Activated B cell treated with CpG ODN at 0.5 μM for 24 hours (primary cell): ENCODE measurements at regions of chr11 and their contacts with region 1.

Region 1: GRCh38 chr11:68271781-68272608 is at the start of gene C11orf24:
- DNase-seq: peak; percentile 95
- ATAC-seq: peak; percentile 78
- H3K4me3 Mint-ChIP-seq: peak within 1 kb of the TSS; percentile 95
- H3K27ac Mint-ChIP-seq: peak within 1 kb of the TSS; percentile 98
- H3K4me1 Mint-ChIP-seq: peaks cover 79% of the 10 kb centered on the region
- H3K27me3 Mint-ChIP-seq: no peaks in the 10 kb centered on the region
- CTCF ChIP-seq: no peak
- total RNA-seq, gene C11orf24: 75.5 and 78.0 TPM in 2 replicates

Region 2: GRCh38 chr11:67613960-67614715 is 657.9 kb before region 1 on chr11:
- CTCF ChIA-PET with region 1: no interaction called
- POLR2A ChIA-PET with region 1: no interaction called
- intact Hi-C with region 1: loop called (anchors 10 kb)
- DNase-seq: peak; percentile 81
- ATAC-seq: peak; percentile 95
- H3K4me3 Mint-ChIP-seq: peak overlapping the region; percentile 84
- H3K27ac Mint-ChIP-seq: peak overlapping the region; percentile 99
- H3K4me1 Mint-ChIP-seq: peaks cover 41% of the 10 kb centered on the region
- H3K27me3 Mint-ChIP-seq: no peaks in the 10 kb centered on the region
- CTCF ChIP-seq: no peak

Region 3: DNA sequence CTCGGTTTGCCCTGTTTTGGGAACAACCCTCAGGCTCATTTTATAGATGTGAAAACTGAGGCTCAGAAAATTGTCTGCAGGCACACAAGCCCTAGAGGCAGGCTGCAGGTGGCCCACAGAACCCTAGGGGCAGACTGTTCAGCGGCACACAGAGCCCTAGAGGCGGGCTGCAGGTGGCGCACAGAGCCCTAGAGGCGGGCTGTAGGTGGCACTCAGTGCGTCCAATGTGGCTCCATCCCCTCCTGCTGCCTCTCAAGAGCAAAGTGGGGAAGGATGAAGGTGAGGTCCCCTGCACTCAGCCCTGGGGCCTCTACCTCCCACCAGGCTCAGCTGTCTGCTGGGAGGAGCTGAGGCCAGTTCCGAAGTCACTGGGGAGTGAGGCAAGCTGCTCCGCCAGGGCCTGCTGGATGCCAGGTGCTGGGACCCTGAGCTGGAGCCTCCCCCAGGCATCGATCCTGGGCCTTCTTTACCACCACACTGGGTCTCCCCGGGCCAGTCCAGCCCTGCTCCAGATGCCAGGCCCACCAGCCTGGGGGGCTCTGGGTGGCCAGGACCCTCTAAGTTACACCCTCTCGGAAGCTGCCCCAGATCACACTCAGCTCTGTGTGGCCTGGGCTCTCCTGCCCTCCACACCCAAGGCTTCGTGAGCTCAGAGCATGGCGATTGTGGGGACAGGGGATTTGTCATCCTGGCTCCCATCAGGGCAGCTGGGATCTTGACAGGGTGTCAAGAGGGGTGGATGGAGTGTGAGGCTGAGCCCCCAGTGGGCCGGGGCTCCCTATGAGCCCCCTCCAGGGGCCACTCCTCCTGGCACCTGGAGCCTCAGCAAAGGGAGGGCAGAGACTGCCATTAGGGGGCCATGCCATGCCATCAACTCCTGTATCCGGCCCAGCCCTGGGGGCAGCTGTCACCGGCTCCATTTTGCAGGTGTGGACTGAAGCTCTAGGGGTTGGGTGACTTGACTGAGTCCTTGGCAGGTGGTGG is 623.6 kb before region 1 on chr11:
- CTCF ChIA-PET with region 1: no interaction called
- POLR2A ChIA-PET with region 1: no interaction called
- intact Hi-C with region 1: no loop called
- DNase-seq: peak; percentile 59
- ATAC-seq: peak; percentile 85
- H3K4me3 Mint-ChIP-seq: peak overlapping the region; percentile 53
- H3K27ac Mint-ChIP-seq: peak overlapping the region; percentile 50
- H3K4me1 Mint-ChIP-seq: peaks cover 67% of the 10 kb centered on the region
- H3K27me3 Mint-ChIP-seq: peaks cover 2% of the 10 kb centered on the region
- CTCF ChIP-seq: peak; percentile 82

Region 4: DNA sequence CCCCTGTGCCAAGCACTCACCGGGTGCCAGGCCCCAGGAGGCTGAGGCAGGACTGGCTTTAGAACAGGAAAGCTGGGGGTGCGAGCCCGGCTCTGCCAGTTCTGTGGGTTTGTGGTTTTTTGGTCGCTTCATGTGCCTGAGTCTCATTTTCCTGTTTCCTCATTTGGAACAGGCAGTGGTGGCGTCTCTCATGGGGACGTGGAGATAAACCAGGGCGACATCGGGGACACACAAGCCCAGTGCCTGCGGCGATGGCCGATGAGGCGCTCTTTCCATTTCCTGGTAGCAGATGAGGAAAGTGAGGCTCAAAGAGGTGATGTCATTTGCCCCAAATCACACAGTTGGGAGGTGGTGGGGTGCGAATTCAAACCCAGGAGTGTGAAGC is 130.0 kb before region 1 on chr11:
- CTCF ChIA-PET with region 1: no interaction called
- POLR2A ChIA-PET with region 1: no interaction called
- intact Hi-C with region 1: no loop called
- DNase-seq: no peak
- ATAC-seq: peak; percentile 25
- H3K4me3 Mint-ChIP-seq: no peak overlapping the region
- H3K27ac Mint-ChIP-seq: no peak overlapping the region
- H3K4me1 Mint-ChIP-seq: peaks cover 13% of the 10 kb centered on the region
- H3K27me3 Mint-ChIP-seq: peaks cover 6% of the 10 kb centered on the region
- CTCF ChIP-seq: no peak

Region 5: DNA sequence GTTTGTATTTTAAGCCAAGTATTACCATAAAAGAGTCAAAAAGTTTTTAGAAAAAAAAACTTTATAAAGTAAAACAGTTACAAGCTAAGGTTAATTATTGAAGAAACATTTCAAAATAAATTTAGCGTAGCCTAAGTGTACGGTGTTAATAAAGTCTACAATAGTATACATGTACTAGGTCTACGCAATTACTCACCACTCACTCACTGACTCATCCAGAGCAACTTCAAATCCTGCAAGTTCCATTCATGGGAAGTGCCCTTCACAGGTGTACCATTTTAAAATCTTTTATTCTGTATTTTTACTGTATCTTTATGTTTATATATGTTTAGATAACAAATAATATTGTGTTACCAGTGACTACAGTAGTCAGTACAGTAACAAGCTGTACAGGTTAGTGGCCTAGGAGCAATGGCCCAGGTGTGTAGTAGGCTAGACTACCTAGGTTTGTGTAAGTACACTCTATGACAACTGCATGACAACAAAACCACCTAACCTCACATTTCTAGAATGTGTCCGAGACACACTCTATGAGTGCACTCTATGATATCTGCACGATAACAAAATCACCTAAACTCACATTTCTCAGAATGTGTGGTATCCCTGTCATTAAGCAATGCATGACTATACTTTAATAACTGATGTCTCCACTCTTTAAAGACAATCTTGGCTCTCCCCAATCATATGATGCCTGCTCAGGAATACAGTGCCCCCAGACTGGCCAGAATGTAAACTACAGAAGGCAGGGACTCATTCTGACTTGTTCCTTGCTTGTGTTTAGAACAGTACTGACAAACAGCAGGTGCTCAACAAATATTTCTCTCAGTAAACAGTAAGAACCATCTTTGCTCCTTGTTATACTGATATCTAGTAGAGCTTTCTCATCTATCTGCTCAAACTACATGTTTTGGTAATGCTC is 80.1 kb before region 1 on chr11:
- CTCF ChIA-PET with region 1: no interaction called
- POLR2A ChIA-PET with region 1: no interaction called
- intact Hi-C with region 1: no loop called
- DNase-seq: no peak
- ATAC-seq: no peak
- H3K4me3 Mint-ChIP-seq: no peak overlapping the region
- H3K27ac Mint-ChIP-seq: no peak overlapping the region
- H3K4me1 Mint-ChIP-seq: peaks cover 62% of the 10 kb centered on the region
- H3K27me3 Mint-ChIP-seq: no peaks in the 10 kb centered on the region
- CTCF ChIP-seq: no peak

Region 6: GRCh38 chr11:68257475-68258362 is 14.3 kb before region 1 on chr11:
- CTCF ChIA-PET with region 1: interaction called, 70 read pairs
- POLR2A ChIA-PET with region 1: interaction called, 75 read pairs
- intact Hi-C with region 1: loop called (anchors 1 kb)
- DNase-seq: peak; percentile 90
- ATAC-seq: peak; percentile 94
- H3K4me3 Mint-ChIP-seq: peak overlapping the region; percentile 52
- H3K27ac Mint-ChIP-seq: peak overlapping the region; percentile 80
- H3K4me1 Mint-ChIP-seq: peaks cover 20% of the 10 kb centered on the region
- H3K27me3 Mint-ChIP-seq: no peaks in the 10 kb centered on the region
- CTCF ChIP-seq: no peak

Region 7: DNA sequence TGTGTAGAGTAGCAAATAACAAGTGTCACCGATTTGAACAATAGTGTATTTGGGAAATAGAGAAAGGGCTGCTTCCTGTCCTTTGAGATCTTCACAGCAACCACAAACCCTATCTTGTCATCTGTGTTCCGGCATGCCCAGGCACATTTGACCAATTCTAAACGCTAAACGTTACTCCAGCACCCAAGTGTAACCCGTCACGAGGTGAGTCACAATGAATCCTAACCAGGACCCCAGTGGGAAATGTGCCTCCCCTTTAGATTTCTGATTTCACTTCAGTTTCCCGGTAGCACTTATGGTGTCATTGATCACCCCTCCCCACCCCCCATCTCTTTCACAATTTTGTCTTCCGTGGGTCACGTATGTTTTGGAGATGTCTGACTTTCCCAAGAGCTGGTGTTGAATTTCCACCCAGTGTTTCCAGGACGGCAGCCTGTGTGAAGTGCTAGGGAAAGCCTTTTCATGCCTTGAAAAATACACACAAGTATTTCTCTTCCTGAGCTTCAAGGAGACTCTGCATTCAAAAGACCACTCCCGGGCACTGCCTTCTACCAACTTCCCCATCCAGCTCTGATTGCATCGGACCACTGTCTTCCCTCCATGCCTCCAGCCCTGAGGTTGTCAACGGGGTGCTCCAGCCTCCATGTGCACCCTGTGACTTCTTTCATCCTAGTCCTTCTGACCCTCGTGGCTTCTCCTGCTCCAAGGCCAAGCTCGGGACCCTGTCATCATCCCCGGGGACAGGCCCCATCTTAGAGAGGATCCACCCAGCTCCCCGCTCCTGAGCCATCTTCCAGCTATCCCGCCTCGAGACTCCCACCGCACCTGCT is 10.4 kb after region 1 on chr11:
- CTCF ChIA-PET with region 1: no interaction called
- POLR2A ChIA-PET with region 1: interaction called, 37 read pairs
- intact Hi-C with region 1: loop called (anchors 1 kb)
- DNase-seq: no peak
- ATAC-seq: peak; percentile 92
- H3K4me3 Mint-ChIP-seq: peak overlapping the region; percentile 65
- H3K27ac Mint-ChIP-seq: peak overlapping the region; percentile 57
- H3K4me1 Mint-ChIP-seq: peaks cover 25% of the 10 kb centered on the region
- H3K27me3 Mint-ChIP-seq: no peaks in the 10 kb centered on the region
- CTCF ChIP-seq: no peak

Region 8: DNA sequence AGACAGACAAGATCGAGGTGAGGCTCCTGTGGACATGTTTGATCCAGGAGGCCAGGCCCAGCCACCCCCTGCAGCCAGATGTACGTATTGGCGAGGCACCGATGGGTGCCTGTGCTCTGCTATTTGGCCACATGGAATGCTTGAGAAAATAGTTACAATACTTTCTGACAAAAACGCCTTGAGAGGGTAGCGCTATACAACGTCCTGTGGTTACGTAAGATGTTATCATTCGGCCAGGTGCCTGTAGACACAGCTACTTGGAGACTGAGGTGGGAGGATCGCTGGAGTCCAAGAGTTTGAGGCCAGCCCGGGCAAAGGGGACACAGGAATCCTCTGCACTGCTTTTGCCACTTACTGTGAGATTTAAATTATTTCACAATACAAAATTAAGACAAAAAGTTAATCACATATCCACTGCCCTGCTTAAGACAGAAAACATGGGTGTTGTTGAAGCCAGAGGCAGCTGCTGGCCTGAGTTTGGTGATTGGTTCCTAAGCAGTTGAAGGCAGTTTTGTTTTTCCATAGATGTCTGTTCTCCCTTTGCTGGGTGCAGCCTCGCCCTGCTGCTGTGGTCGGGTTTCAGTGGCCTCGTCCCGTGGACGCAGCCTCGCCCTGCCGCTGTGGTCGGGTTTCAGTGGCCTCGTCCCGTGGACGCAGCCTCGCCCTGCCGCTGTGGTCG is 118.2 kb after region 1 on chr11:
- CTCF ChIA-PET with region 1: no interaction called
- POLR2A ChIA-PET with region 1: no interaction called
- intact Hi-C with region 1: no loop called
- DNase-seq: no peak
- ATAC-seq: no peak
- H3K4me3 Mint-ChIP-seq: no peak overlapping the region
- H3K27ac Mint-ChIP-seq: no peak overlapping the region
- H3K4me1 Mint-ChIP-seq: no peaks in the 10 kb centered on the region
- H3K27me3 Mint-ChIP-seq: no peaks in the 10 kb centered on the region
- CTCF ChIP-seq: no peak

Region 9: DNA sequence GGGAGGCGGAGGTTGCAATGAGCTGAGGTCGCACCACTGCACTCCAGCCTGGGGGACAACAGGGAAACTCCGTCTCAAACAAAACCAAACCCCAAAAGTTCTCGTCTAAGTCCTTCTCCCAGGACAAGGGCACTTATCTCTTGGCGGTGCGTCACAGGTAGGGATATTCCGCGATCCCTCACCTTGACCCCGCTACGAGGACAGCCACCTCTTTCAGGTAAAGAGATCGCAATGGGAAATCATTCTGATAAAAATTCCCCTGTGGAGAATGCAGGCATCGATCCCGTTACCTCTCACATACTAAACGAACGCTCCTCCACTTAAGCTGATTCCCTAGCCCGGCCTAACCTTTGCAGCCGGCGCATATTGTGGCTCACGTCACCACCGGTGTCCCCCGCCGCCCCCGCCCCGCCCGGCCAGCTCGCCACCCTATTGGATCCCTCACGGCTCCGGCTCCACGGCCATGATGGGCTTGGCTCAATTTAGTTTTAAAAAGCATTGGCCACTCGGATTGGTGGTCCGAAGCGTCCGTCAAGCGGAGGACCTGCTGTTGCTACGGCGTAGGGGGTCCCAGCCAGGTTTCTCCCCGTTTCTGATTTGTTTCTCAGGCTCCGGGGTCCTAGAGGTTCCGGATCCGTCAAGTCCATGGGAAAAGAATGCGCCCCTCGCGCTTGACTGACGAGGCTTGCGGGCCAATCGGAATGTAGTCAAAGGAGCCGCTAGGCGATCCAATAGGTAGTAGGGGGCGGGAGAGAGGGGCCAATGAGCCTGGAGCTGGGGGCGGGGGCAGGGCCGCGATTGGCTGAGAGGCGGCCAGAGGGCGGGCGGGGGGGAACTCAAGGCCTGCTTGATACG is 188.1 kb after region 1 on chr11:
- CTCF ChIA-PET with region 1: no interaction called
- POLR2A ChIA-PET with region 1: interaction called, 4 read pairs
- intact Hi-C with region 1: loop called (anchors 1 kb)
- DNase-seq: peak; percentile 81
- ATAC-seq: peak; percentile 92
- H3K4me3 Mint-ChIP-seq: peak overlapping the region; percentile 94
- H3K27ac Mint-ChIP-seq: peak overlapping the region; percentile 97
- H3K4me1 Mint-ChIP-seq: peaks cover 39% of the 10 kb centered on the region
- H3K27me3 Mint-ChIP-seq: no peaks in the 10 kb centered on the region
- CTCF ChIP-seq: no peak